Activated T-helper 2 cell treated with anti-CD3 and anti-CD28 coated beads, Interferon-gamma antibody, Interleukin-2, Interleukin-4, amounts not matched to agents 10 μg/mL and 5 μg/mL and 100 μg/mL, durations not matched to agents 14 hours and 24 hours and 36 hours (primary cell): ENCODE measurements at regions of chr6 and their contacts with region 1.

Region 1: GRCh38 chr6:41002216-41002615 is 36.8 kb downstream of the UNC5CL start:
- DNase-seq: no peak
- H3K4me3 Mint-ChIP-seq: no peak overlapping the region
- H3K27ac Mint-ChIP-seq: no peak overlapping the region
- H3K4me1 Mint-ChIP-seq: peaks cover 2% of the 10 kb centered on the region
- H3K27me3 Mint-ChIP-seq: peaks cover 44% of the 10 kb centered on the region

Region 2: DNA sequence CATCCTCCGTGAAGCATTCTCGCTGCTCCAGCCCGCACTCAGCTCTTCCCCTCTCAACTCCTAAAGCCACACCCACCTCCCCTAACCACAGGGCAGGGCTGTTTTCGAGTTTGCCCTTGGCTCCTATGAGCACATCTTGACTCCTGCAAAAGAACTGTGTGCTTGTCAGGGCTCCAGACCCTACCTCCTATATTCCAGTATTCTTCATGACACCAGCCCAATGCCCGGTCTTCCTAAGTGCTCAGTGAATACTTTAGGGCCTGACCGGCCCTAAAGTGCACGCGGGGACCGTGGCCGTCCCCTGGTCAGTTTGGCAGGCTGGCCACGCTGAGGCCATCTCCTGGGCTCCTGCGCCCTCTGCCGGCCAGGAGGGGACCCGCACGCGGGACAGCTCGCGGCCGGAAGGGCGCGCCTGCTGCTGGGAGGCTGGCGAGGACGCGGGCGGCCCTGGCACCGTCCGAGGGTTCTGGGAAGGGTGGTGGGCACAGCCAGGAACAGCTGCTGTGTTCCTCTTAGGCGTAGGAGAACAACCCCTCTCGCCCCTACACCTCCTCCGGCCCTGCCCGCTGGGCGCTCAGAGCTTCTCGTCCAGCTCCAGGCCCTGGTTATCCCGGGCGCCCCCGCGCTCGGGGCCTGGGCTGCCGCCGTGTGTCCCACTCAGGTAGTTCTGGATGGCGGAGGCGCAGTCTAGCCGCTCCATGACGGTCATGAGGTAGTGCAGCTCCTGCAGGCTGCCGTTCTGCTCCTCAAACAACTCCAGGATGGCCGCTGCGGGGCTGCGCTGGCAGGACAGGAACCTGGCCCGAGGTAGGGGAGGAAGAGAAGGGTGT is 25.8 kb after region 1 on chr6:
- intact Hi-C with region 1: loop called (anchors 1 kb)
- DNase-seq: peak; percentile 77
- H3K4me3 Mint-ChIP-seq: peak overlapping the region; percentile 89
- H3K27ac Mint-ChIP-seq: peak overlapping the region; percentile 94
- H3K4me1 Mint-ChIP-seq: peaks cover 19% of the 10 kb centered on the region
- H3K27me3 Mint-ChIP-seq: no peaks in the 10 kb centered on the region